PC-9 (cell line): ENCODE measurements at regions of chr1 and their contacts with region 1.

Region 1: GRCh38 chr1:116372587-116373444 is at the start of gene ATP1A1:
- DNase-seq: peak; percentile 91 to 98
- H3K4me3 ChIP-seq: peak within 1 kb of the TSS; percentile 75
- H3K27ac ChIP-seq: peak within 1 kb of the TSS; percentile 90
- H3K4me1 ChIP-seq: peaks cover 42% of the 10 kb centered on the region
- H3K27me3 ChIP-seq: no peaks in the 10 kb centered on the region
- CTCF ChIP-seq: no peak; the same call in 1 of the 2 replicates
- total RNA-seq, gene ATP1A1: 393 and 399 TPM in 2 replicates

Region 2: DNA sequence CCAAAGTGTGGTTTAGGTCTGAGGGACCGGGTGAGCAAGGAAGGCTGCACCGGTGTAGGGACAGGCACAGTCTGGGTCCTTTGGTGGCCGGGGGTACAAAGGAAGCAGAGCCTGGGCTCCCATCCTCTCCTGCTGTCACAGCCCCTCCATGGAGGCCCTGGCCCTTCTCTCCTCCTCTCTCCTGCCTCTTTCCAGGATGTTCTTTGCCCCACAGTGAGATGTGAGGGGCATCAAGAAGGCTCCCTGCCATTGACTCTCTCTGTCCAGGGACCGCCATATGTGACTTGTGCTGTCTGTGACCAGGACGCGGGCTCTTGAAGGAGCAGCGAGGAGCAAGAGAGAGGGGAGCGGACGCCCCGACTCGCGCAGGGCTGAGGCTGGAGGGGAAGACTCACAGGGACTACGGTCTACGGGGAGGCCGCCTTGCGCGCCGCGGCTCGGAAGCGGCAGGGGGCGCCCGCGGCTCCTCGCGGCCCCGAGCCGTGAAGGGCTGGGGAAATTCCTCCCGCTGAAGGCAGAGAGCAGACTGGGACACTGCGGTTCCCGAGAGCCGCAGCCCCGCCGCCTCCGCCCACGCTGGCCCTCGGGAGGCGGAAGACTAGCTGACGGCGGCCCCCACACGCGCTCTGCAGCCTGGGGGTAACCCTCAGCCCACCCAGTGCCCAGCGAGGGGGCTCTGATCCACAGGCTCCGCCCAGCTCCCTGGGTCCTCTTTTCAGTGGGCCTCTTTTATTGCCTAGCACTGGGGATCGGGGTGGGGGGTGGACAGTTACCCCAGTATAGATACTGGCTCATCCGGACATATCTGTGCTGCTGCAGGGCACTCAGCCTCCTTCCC is 220.9 kb before region 1 on chr1:
- CTCF ChIA-PET with region 1: no interaction called
- POLR2A ChIA-PET with region 1: no interaction called
- intact Hi-C with region 1: loop called (anchors 5 kb)
- DNase-seq: peak; percentile 65 to 80
- H3K4me3 ChIP-seq: peak overlapping the region; percentile 60
- H3K27ac ChIP-seq: no peak overlapping the region
- H3K4me1 ChIP-seq: peaks cover 6% of the 10 kb centered on the region; the same call in 1 of the 2 replicates
- H3K27me3 ChIP-seq: no peaks in the 10 kb centered on the region
- CTCF ChIP-seq: peak; percentile 92

Region 3: GRCh38 chr1:116168277-116169097 is 204.3 kb before region 1 on chr1:
- CTCF ChIA-PET with region 1: no interaction called
- POLR2A ChIA-PET with region 1: interaction called, 10 read pairs
- intact Hi-C with region 1: loop called (anchors 5 kb)
- DNase-seq: peak; percentile 53 to 76
- H3K4me3 ChIP-seq: peak overlapping the region; percentile 56
- H3K27ac ChIP-seq: no peak overlapping the region
- H3K4me1 ChIP-seq: peaks cover 13% of the 10 kb centered on the region
- H3K27me3 ChIP-seq: no peaks in the 10 kb centered on the region
- CTCF ChIP-seq: peak; percentile 97

Region 4: DNA sequence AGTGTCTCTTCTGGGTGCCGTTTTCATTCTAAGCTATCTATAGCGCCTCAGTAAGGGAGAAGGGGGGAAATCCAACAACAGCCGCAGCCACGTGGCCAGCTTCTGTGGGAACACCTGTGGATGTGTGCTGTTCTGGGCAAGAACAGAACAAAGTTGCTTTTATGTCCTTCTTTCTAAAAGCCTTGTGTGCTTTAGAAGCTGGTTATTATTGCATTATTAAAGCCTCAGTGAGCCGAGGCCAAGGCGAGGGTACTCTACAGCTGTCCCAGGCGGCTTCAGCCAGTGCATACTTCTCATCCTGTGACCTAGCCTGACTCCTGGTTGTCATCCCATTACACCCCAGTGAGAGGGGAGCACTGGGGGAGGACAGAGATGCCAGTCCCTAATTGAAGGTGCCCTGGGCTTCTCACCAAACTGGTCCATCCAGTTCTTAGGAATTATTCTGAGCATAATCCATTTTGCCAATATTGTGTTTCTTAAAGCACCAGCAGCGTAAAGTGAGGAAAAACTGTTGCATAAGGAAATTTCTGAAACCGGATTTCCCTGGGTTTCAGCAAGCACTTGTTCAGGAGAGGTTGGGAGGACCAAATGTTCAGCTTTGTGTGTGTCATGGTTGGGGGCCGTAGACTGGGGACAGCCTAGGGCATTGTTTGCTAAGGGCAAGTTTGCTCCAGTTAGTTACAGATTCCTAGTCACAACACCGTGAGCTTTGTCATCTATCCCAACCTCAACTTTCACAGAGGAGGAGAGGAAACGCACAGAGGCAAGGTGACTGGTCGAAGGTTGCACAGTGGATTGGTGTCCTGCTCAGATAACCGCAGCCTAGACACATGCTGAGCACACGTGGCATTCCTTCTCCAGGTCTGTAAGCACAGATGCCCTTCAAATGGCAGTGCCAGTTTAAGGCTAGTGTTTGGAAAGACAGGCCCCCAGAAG is 60.8 kb before region 1 on chr1:
- CTCF ChIA-PET with region 1: no interaction called
- POLR2A ChIA-PET with region 1: interaction called, 4 read pairs
- intact Hi-C with region 1: loop called (anchors 1 kb)
- DNase-seq: peak; percentile 65 to 100
- H3K4me3 ChIP-seq: peak overlapping the region; percentile 3; the same call in 1 of the 2 replicates
- H3K27ac ChIP-seq: peak overlapping the region; percentile 88
- H3K4me1 ChIP-seq: peaks cover 65% of the 10 kb centered on the region
- H3K27me3 ChIP-seq: no peaks in the 10 kb centered on the region
- CTCF ChIP-seq: no peak